Caco-2 (cell line): ENCODE measurements at regions of chr10 and their contacts with region 1.

Region 1: DNA sequence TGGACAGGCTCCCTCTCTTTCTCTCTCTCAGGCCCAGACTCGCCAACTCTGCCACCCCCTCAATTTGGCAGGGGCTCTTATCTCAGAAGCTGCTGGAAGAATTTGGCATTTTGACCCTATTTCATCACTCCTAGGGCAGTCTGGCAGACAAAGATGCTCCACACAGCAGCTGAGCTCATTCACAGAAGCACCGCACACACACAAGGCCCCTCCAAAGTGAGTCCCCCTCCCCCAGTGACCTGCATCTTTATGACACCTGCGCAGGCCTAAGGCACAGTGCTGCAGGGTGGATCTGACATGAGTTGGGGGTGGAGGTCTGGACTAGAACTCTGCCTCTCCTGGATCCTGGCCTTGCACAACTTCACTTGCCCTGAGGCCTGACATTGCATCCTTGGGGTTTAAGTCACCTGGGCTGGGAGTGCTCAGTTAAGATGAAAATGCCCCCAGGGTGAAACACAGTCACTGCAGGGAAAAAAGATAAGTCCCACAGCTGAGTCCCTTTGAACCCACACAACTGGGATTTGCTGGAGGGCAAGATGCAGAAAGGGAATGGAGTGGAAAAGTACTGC is 41.1 kb upstream of the DUSP5 start:
- DNase-seq: peak; percentile 96 to 98
- H3K4me3 ChIP-seq: no peak overlapping the region
- H3K4me3 Mint-ChIP-seq: peak overlapping the region; percentile 41
- H3K27ac Mint-ChIP-seq: peak overlapping the region; percentile 88
- H3K4me1 ChIP-seq: peaks cover 36% of the 10 kb centered on the region
- H3K4me1 Mint-ChIP-seq: peaks cover 35% of the 10 kb centered on the region
- H3K27me3 ChIP-seq: no peaks in the 10 kb centered on the region
- H3K27me3 Mint-ChIP-seq: no peaks in the 10 kb centered on the region
- CTCF ChIP-seq: no peak

Region 2: GRCh38 chr10:110311357-110311949 is 145.2 kb before region 1 on chr10:
- CTCF ChIA-PET with region 1: no interaction called
- POLR2A ChIA-PET with region 1: no interaction called
- intact Hi-C with region 1: loop called (anchors 5 kb)
- DNase-seq: peak; percentile 59 to 60
- H3K4me3 ChIP-seq: no peak overlapping the region
- H3K4me3 Mint-ChIP-seq: no peak overlapping the region
- H3K27ac Mint-ChIP-seq: no peak overlapping the region
- H3K4me1 ChIP-seq: peaks cover 7% of the 10 kb centered on the region
- H3K4me1 Mint-ChIP-seq: no peaks in the 10 kb centered on the region
- H3K27me3 ChIP-seq: no peaks in the 10 kb centered on the region
- H3K27me3 Mint-ChIP-seq: no peaks in the 10 kb centered on the region
- CTCF ChIP-seq: peak; percentile 65 to 83

Region 3: DNA sequence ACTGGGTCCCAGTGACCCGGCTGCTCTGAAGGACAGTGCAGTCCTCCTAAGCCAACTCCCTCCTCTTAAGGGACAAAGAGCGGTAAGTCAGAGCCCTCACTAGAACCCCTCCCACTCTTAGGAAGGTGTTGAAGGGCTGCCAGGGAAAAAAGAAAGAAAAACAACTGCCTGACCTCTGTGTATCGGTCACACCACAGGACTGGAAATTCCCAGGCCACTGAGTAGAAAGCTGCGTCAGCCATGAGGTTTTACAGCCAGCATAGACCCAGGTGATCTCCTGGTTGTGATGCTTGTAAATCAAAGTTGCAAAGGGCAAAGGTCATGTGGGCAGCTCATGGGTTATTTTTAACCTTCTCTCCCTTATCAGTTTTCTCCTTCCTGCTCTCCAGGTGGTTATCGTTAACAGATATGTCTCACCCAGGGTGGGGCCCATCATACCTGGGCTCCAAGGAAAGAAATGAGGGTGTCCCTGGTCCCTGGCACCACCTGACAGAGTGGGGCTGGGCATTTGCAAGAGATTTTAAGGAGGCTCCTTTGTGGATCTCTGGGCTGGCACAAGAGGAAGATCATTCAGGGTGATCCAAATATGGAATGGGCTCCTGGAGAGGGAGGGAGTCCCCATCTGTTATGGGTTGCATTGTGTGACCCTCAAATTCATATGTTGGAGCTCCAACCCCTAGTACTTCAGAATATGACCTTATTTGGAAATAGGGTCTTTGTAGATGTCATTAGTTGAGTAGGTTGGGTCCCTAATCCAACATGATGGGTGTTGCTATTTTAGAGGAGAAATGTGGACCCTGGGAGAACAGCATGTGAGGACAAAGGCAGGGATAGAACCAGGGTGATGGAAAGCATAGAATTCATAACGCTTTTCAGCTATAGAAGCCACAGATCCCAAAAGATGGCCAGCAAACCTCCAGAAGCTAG is 60.6 kb before region 1 on chr10:
- CTCF ChIA-PET with region 1: no interaction called
- POLR2A ChIA-PET with region 1: no interaction called
- intact Hi-C with region 1: loop called (anchors 2 kb)
- DNase-seq: peak; percentile 80 to 96
- H3K4me3 ChIP-seq: no peak overlapping the region
- H3K4me3 Mint-ChIP-seq: peak overlapping the region; percentile 20
- H3K27ac Mint-ChIP-seq: peak overlapping the region; percentile 84
- H3K4me1 ChIP-seq: peaks cover 78% of the 10 kb centered on the region
- H3K4me1 Mint-ChIP-seq: peaks cover 55% of the 10 kb centered on the region
- H3K27me3 ChIP-seq: no peaks in the 10 kb centered on the region
- H3K27me3 Mint-ChIP-seq: no peaks in the 10 kb centered on the region
- CTCF ChIP-seq: no peak

Region 4: DNA sequence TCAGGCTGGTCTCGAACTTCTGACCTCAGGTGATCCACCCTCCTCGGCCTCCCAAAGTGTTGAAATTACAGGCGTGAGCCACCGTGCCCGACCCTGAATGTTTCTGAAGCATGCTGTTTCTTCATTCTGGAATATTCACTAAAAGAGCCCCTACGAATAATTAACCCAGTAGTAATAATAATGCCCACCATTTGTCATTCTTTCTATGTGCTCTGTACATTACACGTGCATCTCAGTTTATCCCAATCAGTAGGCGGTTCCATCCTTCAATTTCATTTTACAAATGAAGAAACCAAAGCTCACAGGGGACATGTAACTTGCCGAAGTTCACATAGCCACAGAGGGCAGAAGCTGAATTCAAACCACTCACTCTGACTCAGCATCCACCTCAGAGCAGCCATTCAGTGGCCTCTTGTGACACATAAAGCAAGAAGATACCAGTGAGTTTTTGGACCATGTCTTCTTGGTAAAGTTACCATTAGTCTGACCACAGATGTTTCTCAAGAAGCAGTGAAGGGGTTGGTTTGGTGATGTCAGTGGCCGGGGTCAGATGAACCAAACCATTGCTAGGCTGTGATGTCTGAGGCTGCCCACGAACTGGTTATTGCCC is 30.8 kb before region 1 on chr10:
- CTCF ChIA-PET with region 1: no interaction called
- POLR2A ChIA-PET with region 1: no interaction called
- intact Hi-C with region 1: no loop called
- DNase-seq: no peak
- H3K4me3 ChIP-seq: no peak overlapping the region
- H3K4me3 Mint-ChIP-seq: no peak overlapping the region
- H3K27ac Mint-ChIP-seq: peak overlapping the region; percentile 34
- H3K4me1 ChIP-seq: peaks cover 14% of the 10 kb centered on the region
- H3K4me1 Mint-ChIP-seq: peaks cover 10% of the 10 kb centered on the region
- H3K27me3 ChIP-seq: no peaks in the 10 kb centered on the region
- H3K27me3 Mint-ChIP-seq: no peaks in the 10 kb centered on the region
- CTCF ChIP-seq: no peak

Region 5: DNA sequence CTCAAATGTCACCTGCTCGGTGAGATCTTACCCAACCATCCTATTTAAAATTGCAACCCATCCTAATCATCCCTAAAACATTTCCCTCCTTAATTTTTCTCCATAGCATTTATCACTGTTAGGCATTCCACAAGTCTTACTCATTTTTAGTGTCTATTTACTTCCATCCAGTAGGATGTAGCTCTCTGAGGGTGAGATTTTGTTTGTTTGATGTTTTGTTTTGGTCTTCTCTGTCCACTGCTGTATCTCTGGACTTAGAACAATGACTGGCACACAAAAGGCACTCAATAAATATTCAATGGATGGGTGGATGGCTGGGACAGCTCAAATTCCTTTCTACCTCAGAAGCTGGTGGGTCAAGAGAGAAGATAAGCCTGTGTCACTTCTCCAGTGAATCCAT is 25.3 kb after region 1 on chr10:
- CTCF ChIA-PET with region 1: interaction called, 5 read pairs
- POLR2A ChIA-PET with region 1: interaction called, 15 read pairs
- intact Hi-C with region 1: loop called (anchors 1 kb)
- DNase-seq: no peak
- H3K4me3 ChIP-seq: no peak overlapping the region
- H3K4me3 Mint-ChIP-seq: no peak overlapping the region
- H3K27ac Mint-ChIP-seq: peak overlapping the region; percentile 13
- H3K4me1 ChIP-seq: peaks cover 41% of the 10 kb centered on the region
- H3K4me1 Mint-ChIP-seq: peaks cover 27% of the 10 kb centered on the region
- H3K27me3 ChIP-seq: no peaks in the 10 kb centered on the region
- H3K27me3 Mint-ChIP-seq: no peaks in the 10 kb centered on the region
- CTCF ChIP-seq: no peak

Region 6: DNA sequence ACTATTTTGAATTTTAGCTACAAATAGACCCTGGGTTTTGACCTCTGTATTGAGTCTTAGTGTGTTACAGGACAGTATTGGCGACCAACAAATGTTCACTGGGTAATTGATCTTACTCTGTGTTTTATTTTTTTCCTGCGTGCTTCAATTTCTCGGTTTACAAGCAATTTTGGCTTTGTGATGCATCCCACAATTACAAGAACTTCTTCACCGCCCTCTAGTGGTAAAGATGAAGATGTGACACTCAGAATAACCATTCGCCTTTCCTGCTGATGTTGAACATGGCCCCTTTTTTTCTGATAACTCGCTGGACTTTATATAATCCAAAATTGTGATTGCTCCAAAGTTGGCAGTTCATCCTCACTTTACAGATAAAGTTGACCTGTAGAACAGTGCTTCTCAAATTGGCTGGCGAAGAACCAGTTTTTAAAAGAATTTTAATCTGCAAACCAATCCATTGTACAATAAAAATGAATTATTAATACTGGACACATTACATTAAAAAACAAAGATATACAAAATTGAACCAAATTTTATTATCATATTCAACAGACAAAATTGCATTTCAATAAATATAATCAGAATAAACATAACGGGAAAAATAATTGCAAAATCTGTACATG is 90.6 kb after region 1 on chr10:
- CTCF ChIA-PET with region 1: no interaction called
- POLR2A ChIA-PET with region 1: no interaction called
- intact Hi-C with region 1: loop called (anchors 2 kb)
- DNase-seq: peak in 1 of 2 experiments; percentile 45
- H3K4me3 ChIP-seq: no peak overlapping the region
- H3K4me3 Mint-ChIP-seq: no peak overlapping the region
- H3K27ac Mint-ChIP-seq: no peak overlapping the region
- H3K4me1 ChIP-seq: no peaks in the 10 kb centered on the region
- H3K4me1 Mint-ChIP-seq: peaks cover 11% of the 10 kb centered on the region
- H3K27me3 ChIP-seq: no peaks in the 10 kb centered on the region
- H3K27me3 Mint-ChIP-seq: no peaks in the 10 kb centered on the region
- CTCF ChIP-seq: peak; percentile 85 to 89